Posterior vena cava (tissue), 2 donors: ENCODE measurements at regions of chr14 and their contacts with region 1.

Region 1: DNA sequence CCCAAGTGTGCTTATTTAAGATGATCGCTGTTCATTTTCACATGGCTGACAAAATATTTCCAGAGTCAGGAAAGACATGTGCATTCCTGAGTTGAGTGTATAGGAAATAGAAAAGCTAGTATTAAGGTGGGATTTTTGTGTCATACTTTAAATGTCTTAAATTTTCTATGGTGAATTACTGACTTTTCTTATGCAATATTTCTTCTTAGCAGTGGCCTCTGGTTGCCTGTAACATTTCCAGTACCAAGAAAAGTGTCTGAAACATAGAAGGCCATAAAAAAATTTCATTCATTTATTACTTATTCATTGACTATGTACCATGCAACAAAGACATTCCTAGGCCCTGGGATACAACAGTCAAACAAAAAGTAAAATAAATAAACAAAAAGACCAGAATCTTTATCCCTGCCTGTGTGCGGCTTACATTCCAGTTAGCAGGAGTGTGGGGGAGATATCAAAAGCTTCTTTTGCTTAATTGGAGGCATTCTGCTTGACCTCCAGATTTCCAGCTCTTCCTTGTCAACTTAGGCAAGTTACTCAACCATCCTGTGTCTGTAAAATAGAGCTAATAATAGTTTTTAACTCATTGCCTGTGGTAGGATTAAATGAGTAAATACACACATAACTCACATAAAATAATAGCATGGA is 216.3 kb upstream of the FLRT2 start:
- DNase-seq: no peak

Region 2: DNA sequence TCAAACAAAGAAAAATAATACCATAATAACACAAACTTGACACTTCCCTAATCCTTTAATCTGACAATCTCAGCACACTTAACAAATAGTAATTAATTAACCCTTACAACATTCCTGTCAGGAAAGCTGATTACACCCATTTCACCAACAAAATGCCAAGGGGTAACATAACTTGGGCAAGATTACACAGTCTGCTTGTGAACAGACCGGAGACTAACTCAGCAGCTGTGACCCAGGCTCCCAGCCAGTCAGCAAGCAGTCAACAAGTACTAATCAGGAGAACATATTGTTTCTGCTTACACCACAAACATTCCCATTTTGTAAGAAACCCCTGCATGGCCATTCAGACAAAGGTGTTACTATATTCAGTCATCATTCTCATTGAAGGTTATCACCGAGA is 376.2 kb before region 1 on chr14:
- intact Hi-C with region 1: loop called in 1 of 2 experiments (anchors 5 kb)
- DNase-seq: no peak

Region 3: GRCh38 chr14:85380881-85381280 is 67.2 kb after region 1 on chr14:
- intact Hi-C with region 1: no loop called
- DNase-seq: no peak

Region 4: DNA sequence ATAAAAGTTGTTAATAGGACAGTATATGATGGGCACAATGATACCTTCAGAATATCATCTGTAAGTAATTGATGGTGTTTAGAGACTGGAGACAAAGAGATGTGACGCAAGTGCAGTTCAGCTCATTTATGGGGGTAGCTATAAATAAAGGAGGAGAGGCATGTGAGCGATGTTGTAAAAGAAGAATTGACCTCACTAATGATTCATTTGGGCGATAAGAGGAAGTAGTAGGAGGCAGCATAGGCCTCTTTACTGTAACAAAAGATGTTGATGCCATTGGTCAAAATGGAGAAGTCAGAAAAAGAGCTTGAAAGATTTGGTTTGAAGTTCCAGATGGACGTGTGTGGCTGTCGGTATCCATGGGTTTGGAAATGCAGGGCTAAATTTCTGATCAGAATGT is 286.3 kb after region 1 on chr14:
- intact Hi-C with region 1: no loop called
- DNase-seq: no peak